K562 (cell line): ENCODE measurements at regions of chr10 and their contacts with region 1.

Region 1: DNA sequence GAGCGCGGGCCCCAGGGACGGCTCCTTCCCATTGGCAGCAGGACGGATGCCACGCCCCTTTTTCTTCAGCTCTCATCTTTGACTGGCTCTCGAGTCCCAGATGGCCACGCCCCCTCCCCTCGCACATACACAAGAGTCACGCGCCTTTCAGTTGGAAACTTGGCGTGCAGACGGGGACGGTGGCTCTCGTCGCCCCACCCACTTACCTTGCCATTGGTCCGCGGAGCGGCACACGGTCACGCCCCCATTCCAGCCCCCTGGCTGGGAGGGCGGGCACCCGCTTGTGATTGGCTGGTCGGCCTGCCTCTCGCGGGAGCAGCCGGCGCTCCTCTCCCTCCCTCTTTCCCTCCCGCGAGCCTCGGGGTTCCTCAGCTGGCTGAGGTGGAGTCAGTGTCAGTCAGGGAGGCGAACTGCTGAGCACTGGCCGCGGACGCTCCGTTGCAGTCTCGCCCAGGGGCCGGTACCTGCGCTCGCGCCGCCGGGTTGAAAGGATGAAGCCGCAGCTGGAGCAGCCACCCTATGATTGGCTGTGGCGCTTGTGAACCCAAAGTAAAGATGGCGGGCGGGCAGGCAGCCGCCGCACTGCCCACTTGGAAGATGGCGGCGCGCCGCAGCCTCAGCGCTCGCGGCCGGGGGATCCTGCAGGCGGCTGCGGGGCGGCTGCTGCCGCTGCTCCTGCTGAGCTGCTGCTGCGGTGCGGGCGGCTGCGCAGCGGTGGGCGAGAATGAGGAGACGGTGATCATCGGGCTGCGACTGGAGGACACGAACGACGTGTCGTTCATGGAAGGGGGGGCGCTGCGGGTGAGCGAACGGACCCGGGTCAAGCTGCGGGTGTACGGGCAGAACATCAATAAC is at the start of gene CNNM2:
- DNase-seq: peak; percentile 95 to 99 (median 96)
- ATAC-seq: peak; percentile 93
- H3K4me3 ChIP-seq: peak within 1 kb of the TSS; percentile 87
- H3K27ac ChIP-seq: peak within 1 kb of the TSS; percentile 81; the same call in 2 of the 3 replicates
- H3K4me1 ChIP-seq: peaks cover 0 to 26% of the 10 kb centered on the region in 2 experiments; a peak in 4 of 5 replicates
- H3K27me3 ChIP-seq: no peaks in the 10 kb centered on the region
- CTCF ChIP-seq: no peak
- EP300 ChIP-seq: peak; percentile 1; the same call in 1 of the 2 replicates
- POLR2A ChIP-seq: peak; percentile 67
- RAD21 ChIP-seq: no peak
- polyA plus RNA-seq, gene CNNM2: 0.21 to 0.23 TPM

Region 2: GRCh38 chr10:102729029-102730026 is 188.9 kb before region 1 on chr10:
- CTCF ChIA-PET with region 1: interaction called, 3 read pairs
- POLR2A ChIA-PET with region 1: no interaction called
- in situ Hi-C with region 1: no loop called
- intact Hi-C with region 1: loop called (anchors 5 kb)
- DNase-seq: peak; percentile 69 to 76 (median 70)
- ATAC-seq: peak; percentile 99
- H3K4me3 ChIP-seq: no peak overlapping the region
- H3K27ac ChIP-seq: no peak overlapping the region
- H3K4me1 ChIP-seq: peaks cover 0 to 5% of the 10 kb centered on the region in 2 experiments; a peak in 1 of 5 replicates
- H3K27me3 ChIP-seq: no peaks in the 10 kb centered on the region
- CTCF ChIP-seq: peak; percentile 79 to 86 (median 82)
- EP300 ChIP-seq: no peak
- POLR2A ChIP-seq: no peak
- RAD21 ChIP-seq: peak; percentile 87 to 89

Region 3: GRCh38 chr10:102962951-102963755 is 45.0 kb after region 1 on chr10:
- CTCF ChIA-PET with region 1: no interaction called
- POLR2A ChIA-PET with region 1: no interaction called
- in situ Hi-C with region 1: no loop called
- intact Hi-C with region 1: loop called (anchors 5 kb)
- DNase-seq: peak in 3 of 4 experiments; percentile 15 to 51 (median 30)
- ATAC-seq: peak; percentile 83
- H3K4me3 ChIP-seq: no peak overlapping the region
- H3K27ac ChIP-seq: 0 out of 3 replicates have a peak overlapping the region, but pooled peaks have one; percentile 15
- H3K4me1 ChIP-seq: peaks cover 0 to 20% of the 10 kb centered on the region in 2 experiments; a peak in 2 of 5 replicates
- H3K27me3 ChIP-seq: no peaks in the 10 kb centered on the region
- CTCF ChIP-seq: no peak
- EP300 ChIP-seq: peak; percentile 65
- POLR2A ChIP-seq: no peak
- RAD21 ChIP-seq: peak in 1 of 2 experiments; percentile 39; a peak in 1 of 4 replicates

Region 4: DNA sequence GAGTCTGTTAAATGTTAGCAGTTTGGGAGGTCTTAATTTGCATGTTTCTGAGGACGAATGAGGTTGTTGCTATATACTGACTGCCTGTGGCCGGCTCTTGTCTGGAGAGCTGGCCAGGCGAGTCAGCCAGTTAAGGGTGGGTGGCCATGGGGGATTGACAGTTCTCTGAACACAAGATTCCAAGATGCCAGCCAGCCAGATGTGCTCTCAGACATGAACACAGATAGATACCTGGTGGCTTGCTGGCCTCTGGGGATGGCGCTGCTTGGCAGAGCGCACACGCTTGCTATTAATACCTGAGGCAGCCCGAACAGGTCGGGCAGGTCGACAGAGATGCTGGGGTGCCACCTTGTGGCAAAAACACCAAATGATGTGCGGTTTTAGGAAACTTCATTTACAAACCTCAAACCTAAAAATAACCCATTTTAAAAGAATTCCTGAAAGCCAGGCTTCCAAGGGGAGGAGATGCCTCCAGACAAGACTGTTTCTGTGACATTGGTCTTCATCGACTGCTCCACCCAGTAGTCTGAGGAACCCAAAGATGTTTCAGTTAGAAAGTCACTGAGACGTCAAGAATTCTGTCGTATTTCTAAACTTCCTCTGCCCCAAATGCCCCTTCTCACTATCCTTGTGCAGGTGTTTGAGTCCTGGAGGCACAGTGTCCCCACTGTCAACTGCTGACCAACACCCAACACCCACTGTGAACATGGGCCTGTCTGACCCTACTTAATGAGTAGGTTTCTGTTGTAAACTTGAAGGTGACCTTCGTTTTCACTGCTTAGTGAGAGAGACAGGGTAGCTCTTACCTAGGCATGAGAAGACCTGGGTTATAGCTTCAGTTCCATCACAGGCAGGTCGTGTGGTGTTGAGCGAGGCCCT is 151.5 kb after region 1 on chr10:
- CTCF ChIA-PET with region 1: interaction called, 61 read pairs
- POLR2A ChIA-PET with region 1: interaction called, 7 read pairs
- in situ Hi-C with region 1: no loop called
- intact Hi-C with region 1: loop called (anchors 1 kb)
- DNase-seq: peak; percentile 34 to 69 (median 51)
- ATAC-seq: peak; percentile 84
- H3K4me3 ChIP-seq: no peak overlapping the region
- H3K27ac ChIP-seq: no peak overlapping the region
- H3K4me1 ChIP-seq: no peaks in the 10 kb centered on the region; a peak in 1 of 5 replicates
- H3K27me3 ChIP-seq: no peaks in the 10 kb centered on the region
- CTCF ChIP-seq: peak; percentile 64 to 74 (median 72)
- EP300 ChIP-seq: no peak
- POLR2A ChIP-seq: no peak
- RAD21 ChIP-seq: peak; percentile 81 to 91

Region 5: DNA sequence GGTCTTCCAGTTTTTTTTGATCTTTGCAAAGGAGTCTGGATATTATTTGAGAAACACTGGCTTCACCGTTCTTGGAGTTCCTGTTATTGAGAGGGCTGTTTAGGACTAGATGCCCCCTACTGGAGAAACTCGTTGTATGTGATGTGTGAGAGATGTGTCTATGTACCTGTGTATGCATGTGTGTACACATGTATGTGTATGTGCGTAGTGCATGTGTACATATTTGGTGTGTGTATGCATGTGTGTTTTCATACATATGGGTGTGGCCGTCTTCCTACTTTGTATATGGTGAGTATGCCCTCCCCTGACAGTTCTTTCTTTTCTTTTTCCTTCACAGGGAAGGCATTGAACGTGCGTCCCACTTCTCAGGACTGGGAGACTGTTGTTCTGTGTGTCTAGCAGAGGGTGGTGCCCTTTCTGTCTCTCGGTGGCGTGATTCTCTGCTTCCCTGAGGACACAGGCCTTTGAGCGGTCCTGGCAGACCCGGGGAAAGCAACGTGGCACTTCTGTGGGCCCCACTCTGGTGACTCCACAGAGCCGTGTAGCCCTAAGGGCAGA is 563.9 kb after region 1 on chr10:
- CTCF ChIA-PET with region 1: no interaction called
- POLR2A ChIA-PET with region 1: no interaction called
- in situ Hi-C with region 1: no loop called
- intact Hi-C with region 1: loop called (anchors 10 kb)
- DNase-seq: peak; percentile 51 to 73 (median 57)
- ATAC-seq: peak; percentile 88
- H3K4me3 ChIP-seq: no peak overlapping the region
- H3K27ac ChIP-seq: no peak overlapping the region
- H3K4me1 ChIP-seq: peaks cover 0 to 10% of the 10 kb centered on the region in 2 experiments; a peak in 2 of 5 replicates
- H3K27me3 ChIP-seq: 0 out of 5 replicates have a peak, but pooled peaks cover 0 to 3% of the 10 kb centered on the region in 2 experiments
- CTCF ChIP-seq: peak; percentile 33 to 59 (median 53); a peak in 4 of 6 replicates
- EP300 ChIP-seq: no peak
- POLR2A ChIP-seq: no peak
- RAD21 ChIP-seq: peak; percentile 41 to 62; a peak in 3 of 4 replicates